Naive thymus-derived CD8-positive, alpha-beta T cell (primary cell): ENCODE measurements at regions of chr11 and their contacts with region 1.

Region 1: GRCh38 chr11:8682303-8683114 is at the starts of genes RPL27A and TRIM66:
- DNase-seq: peak; percentile 97 to 99 (median 99)
- ATAC-seq: peak; percentile 93 to 95
- H3K4me3 Mint-ChIP-seq: peak within 1 kb of the TSS; percentile 86 to 97 (median 95)
- H3K27ac Mint-ChIP-seq: peak within 1 kb of the TSS; percentile 96 to 99 (median 98)
- H3K4me1 Mint-ChIP-seq: peaks cover 25 to 52% (median 44%) of the 10 kb centered on the region in 4 donors
- H3K27me3 Mint-ChIP-seq: no peaks in the 10 kb centered on the region
- polyA plus RNA-seq, gene RPL27A: 4,481 to 4,848 (median 4,520) TPM
- polyA plus RNA-seq, gene TRIM66: 0.14 to 0.53 (median 0.18) TPM

Region 2: DNA sequence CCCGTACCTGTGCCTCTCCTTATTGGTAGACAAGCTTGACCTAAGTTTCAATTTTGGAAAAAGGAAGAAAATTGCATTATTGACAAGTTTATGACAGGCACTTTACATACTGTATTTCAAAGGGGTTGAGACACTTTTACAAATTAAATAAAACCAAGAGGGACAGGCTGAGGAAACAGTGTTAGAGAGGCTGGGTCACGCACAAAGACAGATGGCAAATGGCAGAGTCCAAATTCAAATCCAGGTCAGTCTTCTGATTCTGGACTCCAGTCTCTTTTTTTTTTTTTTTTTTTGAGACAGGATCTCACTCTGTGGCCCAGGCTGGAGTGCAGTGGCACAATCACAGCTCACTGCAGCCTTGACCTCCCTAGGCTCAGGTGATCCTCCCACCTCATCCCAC is 10.2 kb before region 1 on chr11:
- POLR2A ChIA-PET with region 1: interaction called, 10 read pairs
- DNase-seq: no peak
- ATAC-seq: no peak
- H3K4me3 Mint-ChIP-seq: no peak overlapping the region
- H3K27ac Mint-ChIP-seq: peak overlapping the region in 1 of 10 donors; percentile 3
- H3K4me1 Mint-ChIP-seq: peaks cover 0 to 1% (median 0%) of the 10 kb centered on the region in 4 donors
- H3K27me3 Mint-ChIP-seq: no peaks in the 10 kb centered on the region

Region 3: GRCh38 chr11:8719211-8719649 is 36.7 kb after region 1 on chr11:
- POLR2A ChIA-PET with region 1: no interaction called
- DNase-seq: no peak
- ATAC-seq: no peak
- H3K4me3 Mint-ChIP-seq: no peak overlapping the region
- H3K27ac Mint-ChIP-seq: no peak overlapping the region
- H3K4me1 Mint-ChIP-seq: peaks cover 0 to 15% (median 8%) of the 10 kb centered on the region in 4 donors
- H3K27me3 Mint-ChIP-seq: peaks cover 1 to 44% (median 8%) of the 10 kb centered on the region in 5 donors

Region 4: GRCh38 chr11:8922691-8923090 is 240.2 kb after region 1 on chr11:
- POLR2A ChIA-PET with region 1: no interaction called
- DNase-seq: no peak
- ATAC-seq: no peak
- H3K4me3 Mint-ChIP-seq: no peak overlapping the region
- H3K27ac Mint-ChIP-seq: no peak overlapping the region
- H3K4me1 Mint-ChIP-seq: no peaks in the 10 kb centered on the region
- H3K27me3 Mint-ChIP-seq: no peaks in the 10 kb centered on the region